SK-N-SH (cell line): ENCODE measurements at regions of chr9 and their contacts with region 1.

Region 1: GRCh38 chr9:27333241-27334052 is 36.5 kb upstream of the EQTN start:
- DNase-seq: peak; percentile 80
- H3K4me3 ChIP-seq: no peak overlapping the region; a peak in 1 of 4 replicates
- H3K27ac ChIP-seq: no peak overlapping the region
- H3K4me1 ChIP-seq: peaks cover 0 to 21% of the 10 kb centered on the region in 2 experiments; a peak in 1 of 4 replicates
- H3K27me3 ChIP-seq: no peaks in the 10 kb centered on the region
- CTCF ChIP-seq: peak; percentile 86
- EP300 ChIP-seq: no peak
- RAD21 ChIP-seq: peak; percentile 89

Region 2: GRCh38 chr9:27398982-27399653 is 65.7 kb after region 1 on chr9:
- CTCF ChIA-PET with region 1: no interaction called
- POLR2A ChIA-PET with region 1: no interaction called
- DNase-seq: no peak
- H3K4me3 ChIP-seq: no peak overlapping the region
- H3K27ac ChIP-seq: no peak overlapping the region
- H3K4me1 ChIP-seq: peaks cover 4 to 8% of the 10 kb centered on the region in 2 experiments; a peak in 3 of 4 replicates
- H3K27me3 ChIP-seq: no peaks in the 10 kb centered on the region
- CTCF ChIP-seq: no peak
- EP300 ChIP-seq: no peak
- RAD21 ChIP-seq: no peak

Region 3: DNA sequence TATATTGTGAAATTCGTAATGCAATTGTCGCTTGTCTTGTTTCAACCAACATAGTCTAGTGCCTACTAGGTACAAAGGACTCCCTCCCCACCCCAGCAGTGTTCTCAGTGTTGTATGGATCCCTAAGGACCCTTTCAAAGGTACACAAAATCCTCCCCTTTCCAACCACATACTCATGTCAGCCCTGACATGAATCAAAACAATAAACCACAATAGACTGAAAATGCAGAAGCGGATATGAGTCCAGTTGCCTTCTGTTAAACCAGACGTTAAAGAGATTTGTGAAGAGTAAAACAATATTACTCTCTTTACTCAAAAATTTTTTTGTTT is 108.3 kb after region 1 on chr9:
- CTCF ChIA-PET with region 1: no interaction called
- POLR2A ChIA-PET with region 1: no interaction called
- DNase-seq: no peak
- H3K4me3 ChIP-seq: no peak overlapping the region
- H3K27ac ChIP-seq: no peak overlapping the region
- H3K4me1 ChIP-seq: no peaks in the 10 kb centered on the region
- H3K27me3 ChIP-seq: no peaks in the 10 kb centered on the region
- CTCF ChIP-seq: no peak
- EP300 ChIP-seq: no peak
- RAD21 ChIP-seq: no peak

Region 4: DNA sequence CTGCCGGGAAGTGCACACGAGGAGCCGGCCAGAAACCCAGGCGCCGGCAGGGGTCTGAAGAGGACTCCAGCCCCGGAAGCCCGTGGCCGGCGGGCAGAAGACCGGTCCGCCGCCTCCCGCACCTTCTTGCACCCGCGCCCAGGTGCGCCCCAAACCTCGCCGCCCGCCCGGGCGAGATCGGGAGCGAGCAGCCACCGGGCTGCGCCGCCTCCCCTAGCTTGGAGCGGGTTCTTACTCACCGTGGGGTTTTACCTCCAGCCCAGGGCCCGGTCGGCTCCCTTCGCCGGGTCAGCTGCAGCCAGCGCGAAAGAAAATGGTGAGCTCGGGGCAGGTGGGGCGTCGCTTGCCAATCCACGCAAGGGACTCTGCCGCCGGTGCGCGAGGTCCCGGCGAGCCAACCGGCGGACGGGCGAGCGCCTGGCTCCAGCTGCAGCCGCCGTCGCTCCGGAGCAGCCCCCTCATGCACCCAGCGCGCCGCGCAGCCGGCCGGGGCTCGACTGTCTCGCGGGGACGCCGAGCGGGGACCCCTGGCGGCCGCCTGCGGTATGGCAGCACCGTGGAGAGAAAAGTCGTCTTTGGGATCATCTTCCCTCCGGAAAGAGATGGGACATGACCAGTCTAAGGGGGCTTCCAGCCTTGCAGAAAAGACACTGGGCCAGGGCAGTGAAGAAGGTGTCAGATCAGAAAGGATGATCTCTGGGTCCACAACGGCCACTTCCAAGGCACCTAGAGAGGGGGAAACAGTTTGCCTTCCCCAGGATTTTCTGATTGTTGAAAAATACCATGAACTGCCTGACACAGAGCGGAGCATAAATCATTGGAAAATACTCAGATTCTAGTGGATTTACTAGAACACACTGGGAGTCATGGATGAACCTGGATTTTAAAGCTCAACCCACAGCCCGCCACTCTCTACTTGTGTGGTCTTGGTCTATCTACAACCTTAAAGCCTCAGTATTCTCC is 196.2 kb after region 1 on chr9 and contains the start of gene MOB3B:
- CTCF ChIA-PET with region 1: interaction called, 31 read pairs
- POLR2A ChIA-PET with region 1: no interaction called
- DNase-seq: peak; percentile 93
- H3K4me3 ChIP-seq: peak within 1 kb of the TSS; percentile 72 to 75
- H3K27ac ChIP-seq: no peak within 1 kb of the TSS; a peak in 1 of 4 replicates
- H3K4me1 ChIP-seq: peaks cover 0 to 8% of the 10 kb centered on the region in 2 experiments; a peak in 2 of 4 replicates
- H3K27me3 ChIP-seq: no peaks in the 10 kb centered on the region
- CTCF ChIP-seq: peak; percentile 82
- EP300 ChIP-seq: no peak
- RAD21 ChIP-seq: peak; percentile 76
- polyA plus RNA-seq, gene MOB3B: 0.90 and 1.2 TPM in 2 replicates

Region 5: GRCh38 chr9:27539479-27540441 is 206.3 kb after region 1 on chr9:
- CTCF ChIA-PET with region 1: interaction called, 62 read pairs
- POLR2A ChIA-PET with region 1: no interaction called
- DNase-seq: no peak
- H3K4me3 ChIP-seq: no peak overlapping the region
- H3K27ac ChIP-seq: no peak overlapping the region
- H3K4me1 ChIP-seq: peaks cover 0 to 5% of the 10 kb centered on the region in 2 experiments; a peak in 2 of 4 replicates
- H3K27me3 ChIP-seq: no peaks in the 10 kb centered on the region
- CTCF ChIP-seq: no peak
- EP300 ChIP-seq: no peak
- RAD21 ChIP-seq: no peak

Region 6: DNA sequence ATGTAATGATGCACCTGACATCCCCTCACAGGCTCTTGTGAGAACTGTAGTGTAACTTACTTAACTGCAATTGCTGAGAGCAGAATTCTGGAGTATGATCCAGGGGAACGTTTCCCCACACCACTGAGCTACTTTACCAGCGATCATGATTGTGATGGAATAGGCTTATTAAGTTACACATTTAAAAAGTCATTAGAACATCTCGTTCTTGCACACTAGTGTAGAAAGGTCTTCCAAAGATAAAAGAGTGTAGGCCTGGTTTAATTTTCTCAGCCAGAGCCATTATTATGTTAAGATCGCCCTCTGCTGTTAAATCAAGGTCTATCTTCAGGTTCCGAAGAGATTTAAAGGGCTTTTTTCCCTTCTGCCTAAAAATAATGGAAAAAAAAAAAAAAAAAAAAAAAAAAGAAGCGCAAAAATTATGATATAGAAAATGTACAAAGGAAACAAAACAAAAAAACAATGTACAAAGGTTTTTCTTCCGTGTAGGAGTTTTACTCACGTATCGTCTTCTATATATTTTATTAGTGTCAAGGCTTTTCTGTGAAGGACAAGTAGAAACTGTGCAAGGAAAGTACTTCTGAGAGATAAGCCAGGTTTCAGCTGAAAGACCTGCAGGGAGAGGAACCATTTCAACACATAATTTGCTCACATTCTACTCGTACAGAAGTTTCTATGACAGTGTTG is 214.8 kb after region 1 on chr9:
- CTCF ChIA-PET with region 1: interaction called, 62 read pairs
- POLR2A ChIA-PET with region 1: interaction called, 3 read pairs
- DNase-seq: peak; percentile 38
- H3K4me3 ChIP-seq: no peak overlapping the region
- H3K27ac ChIP-seq: peak overlapping the region in 1 of 2 experiments; percentile 39; a peak in 1 of 4 replicates
- H3K4me1 ChIP-seq: no peaks in the 10 kb centered on the region; a peak in 1 of 4 replicates
- H3K27me3 ChIP-seq: no peaks in the 10 kb centered on the region
- CTCF ChIP-seq: peak; percentile 67
- EP300 ChIP-seq: no peak
- RAD21 ChIP-seq: peak; percentile 80